H1 (cell line): ENCODE measurements at regions of chr7 and their contacts with region 1.

Region 1: GRCh38 chr7:100604028-100604975 is 2.1 kb downstream of the PCOLCE start:
- DNase-seq: peak in 1 of 2 experiments; percentile 92
- H3K4me3 ChIP-seq: peak overlapping the region; percentile 68 to 82 (median 78)
- H3K27ac ChIP-seq: peak overlapping the region; percentile 48; the same call in 1 of the 2 replicates
- H3K4me1 ChIP-seq: peaks cover 0 to 31% (median 20%) of the 10 kb centered on the region in 4 experiments; a peak in 6 of 7 replicates
- H3K27me3 ChIP-seq: peaks cover 0 to 10% (median 4%) of the 10 kb centered on the region in 4 experiments; a peak in 2 of 7 replicates
- CTCF ChIP-seq: peak in 1 of 3 experiments; percentile 27; a peak in 2 of 4 replicates
- EP300 ChIP-seq: no peak
- POLR2A ChIP-seq: peak in 1 of 2 experiments; percentile 88; a peak in 2 of 3 replicates
- RAD21 ChIP-seq: peak; percentile 12 to 16; a peak in 2 of 4 replicates

Region 2: GRCh38 chr7:100504887-100505611 is 99.3 kb before region 1 on chr7:
- CTCF ChIA-PET with region 1: no interaction called
- POLR2A ChIA-PET with region 1: no interaction called
- DNase-seq: no peak
- H3K4me3 ChIP-seq: no peak overlapping the region
- H3K27ac ChIP-seq: no peak overlapping the region
- H3K4me1 ChIP-seq: no peaks in the 10 kb centered on the region
- H3K27me3 ChIP-seq: no peaks in the 10 kb centered on the region; a peak in 1 of 7 replicates
- CTCF ChIP-seq: no peak
- EP300 ChIP-seq: no peak
- POLR2A ChIP-seq: no peak
- RAD21 ChIP-seq: no peak

Region 3: GRCh38 chr7:100675581-100676350 is 71.5 kb after region 1 on chr7:
- CTCF ChIA-PET with region 1: interaction called, 3 read pairs
- POLR2A ChIA-PET with region 1: interaction called, 26 read pairs
- DNase-seq: peak in 1 of 2 experiments; percentile 80
- H3K4me3 ChIP-seq: peak overlapping the region; percentile 43 to 99 (median 62)
- H3K27ac ChIP-seq: no peak overlapping the region
- H3K4me1 ChIP-seq: peaks cover 0 to 7% (median 2%) of the 10 kb centered on the region in 4 experiments; a peak in 6 of 7 replicates
- H3K27me3 ChIP-seq: peaks cover 0 to 8% (median 6%) of the 10 kb centered on the region in 4 experiments; a peak in 4 of 7 replicates
- CTCF ChIP-seq: no peak
- EP300 ChIP-seq: no peak
- POLR2A ChIP-seq: no peak
- RAD21 ChIP-seq: no peak

Region 4: DNA sequence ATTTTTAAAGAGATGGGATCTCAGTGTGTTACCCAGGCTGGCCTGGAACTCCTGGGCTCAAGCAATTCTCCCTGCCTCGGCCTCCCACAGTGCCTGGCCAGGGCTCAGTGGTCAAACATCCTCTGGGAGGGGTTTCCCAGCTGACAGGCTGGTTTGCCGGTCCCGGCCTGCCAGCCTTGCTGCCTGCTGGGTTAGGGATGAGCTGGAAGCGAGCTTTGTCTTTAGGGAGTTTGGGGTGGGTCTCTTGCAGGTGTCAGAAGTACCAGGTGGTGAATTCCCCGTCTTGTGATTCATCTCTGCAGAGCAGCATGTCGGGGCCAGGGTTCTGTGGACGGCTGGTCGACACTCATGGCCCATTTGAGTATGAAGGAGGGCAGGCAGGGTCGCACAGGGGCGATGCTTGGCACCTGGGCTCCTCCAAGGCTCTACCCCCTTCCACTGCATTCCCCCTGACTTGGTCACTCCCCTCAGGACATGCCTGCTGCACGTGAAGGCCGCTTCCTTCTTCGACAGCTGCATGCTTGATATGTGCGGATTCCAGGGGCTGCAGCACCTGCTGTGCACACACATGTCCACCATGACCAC is 159.3 kb after region 1 on chr7:
- CTCF ChIA-PET with region 1: no interaction called
- POLR2A ChIA-PET with region 1: no interaction called
- DNase-seq: no peak
- H3K4me3 ChIP-seq: no peak overlapping the region
- H3K27ac ChIP-seq: no peak overlapping the region
- H3K4me1 ChIP-seq: peaks cover 0 to 2% (median 0%) of the 10 kb centered on the region in 4 experiments; a peak in 3 of 7 replicates
- H3K27me3 ChIP-seq: no peaks in the 10 kb centered on the region; a peak in 1 of 7 replicates
- CTCF ChIP-seq: no peak
- EP300 ChIP-seq: no peak
- POLR2A ChIP-seq: no peak
- RAD21 ChIP-seq: no peak